HCT116 (cell line): ENCODE measurements at regions of chr1 and their contacts with region 1.

Region 1: DNA sequence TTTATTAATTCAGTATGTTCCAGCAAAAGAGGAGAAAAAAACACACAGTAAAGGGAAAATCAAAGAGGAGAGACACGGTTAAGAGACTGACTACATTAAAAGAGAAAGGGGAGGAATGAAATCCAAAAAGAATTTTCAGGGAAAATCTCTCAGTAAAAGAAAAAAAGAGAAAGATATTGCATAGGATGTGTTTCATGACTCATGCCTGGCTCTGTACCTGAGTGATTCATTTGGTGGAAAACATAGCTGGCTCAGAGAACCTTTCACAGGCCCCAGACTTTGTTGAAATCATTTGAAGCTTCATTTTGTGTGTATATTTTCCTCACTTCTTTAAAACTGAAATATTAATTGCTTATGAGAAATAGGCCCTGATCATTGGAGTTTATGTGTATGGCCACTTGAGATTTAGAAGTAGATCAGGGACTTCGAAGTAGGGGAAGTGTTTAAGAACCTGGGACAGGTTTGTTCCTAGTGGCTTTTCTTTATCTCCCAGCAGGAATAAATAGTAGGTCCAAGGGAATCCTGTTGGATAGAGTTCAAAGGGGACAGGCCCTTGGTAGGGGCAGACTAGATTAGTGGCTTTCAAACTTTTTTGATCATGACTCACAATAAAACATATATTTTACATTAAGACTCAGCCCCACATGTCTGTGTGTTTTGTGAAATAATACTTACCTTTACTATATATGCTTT is 239.1 kb upstream of the SGIP1 start:
- DNase-seq: peak; percentile 85
- ATAC-seq: peak; percentile 75
- H3K4me3 ChIP-seq: peak overlapping the region in 1 of 2 experiments; percentile 14; a peak in 1 of 4 replicates
- H3K27ac ChIP-seq: peak overlapping the region; percentile 99
- H3K4me1 ChIP-seq: peaks cover 93 to 100% of the 10 kb centered on the region in 2 experiments
- H3K27me3 ChIP-seq: no peaks in the 10 kb centered on the region
- CTCF ChIP-seq: no peak
- POLR2A ChIP-seq: no peak
- RAD21 ChIP-seq: no peak

Region 2: DNA sequence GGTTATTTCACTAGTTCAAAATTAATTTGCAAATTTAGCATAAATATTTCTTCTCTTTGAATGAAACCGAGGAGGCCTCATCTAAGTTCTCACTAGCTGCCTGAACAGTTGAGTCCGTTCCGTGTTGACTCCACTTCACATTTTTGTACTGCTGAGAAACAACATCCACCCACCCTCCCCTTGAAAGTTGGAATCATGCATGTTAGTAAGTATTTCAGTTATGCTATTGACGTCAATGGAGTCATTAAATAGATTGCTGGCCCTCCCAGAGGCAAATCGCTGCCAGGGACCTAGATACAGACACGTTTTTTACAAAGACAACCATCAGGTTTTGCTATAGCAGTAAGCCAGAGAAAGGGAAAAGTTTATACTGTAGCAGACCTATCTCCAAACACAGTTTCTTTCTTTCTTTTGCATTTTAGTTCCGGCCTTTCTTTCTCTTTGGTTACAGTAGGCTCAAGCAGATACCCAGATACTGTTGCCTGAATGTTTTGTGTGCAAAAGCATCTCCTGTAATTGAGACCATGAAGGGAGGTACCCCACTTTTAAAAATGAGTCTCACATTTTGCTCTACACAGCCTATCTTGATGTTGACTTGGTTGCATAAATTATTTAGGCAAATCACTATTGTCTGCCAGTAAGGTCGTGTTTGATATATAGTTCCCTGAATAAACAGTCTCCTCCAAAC is 23.5 kb before region 1 on chr1:
- CTCF ChIA-PET with region 1: no interaction called
- POLR2A ChIA-PET with region 1: no interaction called
- RAD21 ChIA-PET with region 1: interaction called in 1 of 2 experiments, 7 read pairs
- intact Hi-C with region 1: loop called (anchors 2 kb)
- DNase-seq: peak; percentile 96
- ATAC-seq: peak; percentile 73
- H3K4me3 ChIP-seq: peak overlapping the region in 1 of 2 experiments; percentile 7; a peak in 1 of 4 replicates
- H3K27ac ChIP-seq: peak overlapping the region; percentile 96
- H3K4me1 ChIP-seq: peaks cover 68 to 94% of the 10 kb centered on the region in 2 experiments
- H3K27me3 ChIP-seq: no peaks in the 10 kb centered on the region
- CTCF ChIP-seq: no peak
- POLR2A ChIP-seq: no peak
- RAD21 ChIP-seq: peak; percentile 39; the same call in 1 of the 2 replicates

Region 3: GRCh38 chr1:66331657-66332547 is 37.1 kb after region 1 on chr1:
- CTCF ChIA-PET with region 1: no interaction called
- POLR2A ChIA-PET with region 1: interaction called, 25 read pairs
- RAD21 ChIA-PET with region 1: interaction called in 1 of 2 experiments, 4 read pairs
- intact Hi-C with region 1: loop called (anchors 2 kb)
- DNase-seq: no peak
- ATAC-seq: peak; percentile 74
- H3K4me3 ChIP-seq: peak overlapping the region; percentile 72
- H3K27ac ChIP-seq: peak overlapping the region; percentile 96
- H3K4me1 ChIP-seq: peaks cover 63 to 93% of the 10 kb centered on the region in 2 experiments
- H3K27me3 ChIP-seq: no peaks in the 10 kb centered on the region
- CTCF ChIP-seq: peak in 2 of 3 experiments; percentile 11 to 37; a peak in 2 of 6 replicates
- POLR2A ChIP-seq: no peak
- RAD21 ChIP-seq: no peak

Region 4: DNA sequence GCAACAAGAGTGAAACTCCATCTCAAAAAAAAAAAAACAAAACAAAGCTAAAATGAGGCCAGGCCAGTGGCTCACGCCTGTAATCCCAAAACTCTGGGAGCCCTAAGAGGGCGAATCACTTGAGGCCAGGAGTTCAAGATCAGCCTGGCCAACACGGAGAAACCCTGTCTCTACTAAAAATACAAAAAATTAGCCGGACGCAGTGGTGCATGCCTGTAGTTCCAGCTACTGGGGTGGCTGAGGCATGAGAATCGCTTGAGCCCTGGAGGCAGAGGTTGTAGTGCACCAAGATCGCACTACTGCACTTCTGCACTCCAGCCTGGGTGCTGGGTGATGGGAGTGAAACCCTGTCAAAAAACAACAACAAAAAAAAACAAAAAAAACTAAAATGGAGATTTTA is 47.9 kb after region 1 on chr1:
- CTCF ChIA-PET with region 1: no interaction called
- POLR2A ChIA-PET with region 1: interaction called, 14 read pairs
- RAD21 ChIA-PET with region 1: no interaction called
- intact Hi-C with region 1: no loop called
- DNase-seq: no peak
- ATAC-seq: peak; percentile 58
- H3K4me3 ChIP-seq: no peak overlapping the region
- H3K27ac ChIP-seq: peak overlapping the region; percentile 96
- H3K4me1 ChIP-seq: peaks cover 94 to 98% of the 10 kb centered on the region in 2 experiments
- H3K27me3 ChIP-seq: no peaks in the 10 kb centered on the region
- CTCF ChIP-seq: no peak
- POLR2A ChIP-seq: no peak
- RAD21 ChIP-seq: no peak

Region 5: DNA sequence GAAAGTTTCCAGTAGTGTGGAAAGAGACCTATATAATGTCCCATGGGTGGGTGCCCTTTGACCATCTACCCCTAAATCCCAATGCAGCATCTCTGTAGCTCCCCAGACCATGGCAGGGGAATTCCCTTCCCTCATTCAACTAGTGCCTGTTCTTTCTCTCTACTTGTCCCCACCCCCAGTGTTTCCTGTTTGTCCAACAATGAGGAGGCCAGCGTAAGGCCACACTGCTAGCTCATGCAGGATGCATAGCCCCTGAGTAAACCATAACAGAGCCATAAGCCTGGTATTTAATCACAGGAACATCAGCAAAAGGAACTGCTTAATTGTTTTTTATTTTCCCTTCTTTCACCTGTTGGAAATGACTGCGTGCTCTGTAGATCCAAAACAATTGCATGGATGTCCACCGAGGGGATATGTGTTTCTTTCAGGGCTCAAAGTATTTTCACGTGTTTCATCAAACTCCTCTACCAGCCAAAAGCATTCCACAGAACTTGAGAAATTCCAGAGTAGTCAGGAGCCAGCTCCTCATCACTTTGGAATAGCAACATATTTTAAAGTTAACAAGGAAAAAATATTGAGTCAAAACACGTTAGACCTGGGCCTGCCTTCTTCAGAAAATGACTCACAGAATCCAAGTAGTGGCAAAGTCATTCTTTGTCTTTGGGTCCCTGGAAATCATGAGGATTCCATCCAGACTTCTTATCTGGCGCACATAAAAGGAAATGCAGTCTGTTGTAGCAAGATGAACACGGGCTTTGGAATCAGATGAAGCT is 76.6 kb after region 1 on chr1:
- CTCF ChIA-PET with region 1: no interaction called
- POLR2A ChIA-PET with region 1: no interaction called
- RAD21 ChIA-PET with region 1: no interaction called
- intact Hi-C with region 1: no loop called
- DNase-seq: no peak
- ATAC-seq: no peak
- H3K4me3 ChIP-seq: no peak overlapping the region
- H3K27ac ChIP-seq: no peak overlapping the region; the same call in 1 of the 2 replicates
- H3K4me1 ChIP-seq: peaks cover 5 to 21% of the 10 kb centered on the region in 2 experiments; a peak in 2 of 4 replicates
- H3K27me3 ChIP-seq: no peaks in the 10 kb centered on the region
- CTCF ChIP-seq: no peak
- POLR2A ChIP-seq: no peak
- RAD21 ChIP-seq: no peak